ENCODE measurements at regions of chr1 and their contacts with region 1.

Region 1: GRCh38 chr1:168266644-168267186 is 14.0 kb upstream of the TBX19 start:
- DNase-seq: no peak
- H3K4me3 ChIP-seq: no peak overlapping the region
- H3K27ac ChIP-seq: no peak overlapping the region
- H3K4me1 ChIP-seq: peaks cover 5% of the 10 kb centered on the region
- H3K27me3 ChIP-seq: no peaks in the 10 kb centered on the region
- CTCF ChIP-seq: no peak
- EP300 ChIP-seq: no peak
- POLR2A ChIP-seq: no peak

Region 2: DNA sequence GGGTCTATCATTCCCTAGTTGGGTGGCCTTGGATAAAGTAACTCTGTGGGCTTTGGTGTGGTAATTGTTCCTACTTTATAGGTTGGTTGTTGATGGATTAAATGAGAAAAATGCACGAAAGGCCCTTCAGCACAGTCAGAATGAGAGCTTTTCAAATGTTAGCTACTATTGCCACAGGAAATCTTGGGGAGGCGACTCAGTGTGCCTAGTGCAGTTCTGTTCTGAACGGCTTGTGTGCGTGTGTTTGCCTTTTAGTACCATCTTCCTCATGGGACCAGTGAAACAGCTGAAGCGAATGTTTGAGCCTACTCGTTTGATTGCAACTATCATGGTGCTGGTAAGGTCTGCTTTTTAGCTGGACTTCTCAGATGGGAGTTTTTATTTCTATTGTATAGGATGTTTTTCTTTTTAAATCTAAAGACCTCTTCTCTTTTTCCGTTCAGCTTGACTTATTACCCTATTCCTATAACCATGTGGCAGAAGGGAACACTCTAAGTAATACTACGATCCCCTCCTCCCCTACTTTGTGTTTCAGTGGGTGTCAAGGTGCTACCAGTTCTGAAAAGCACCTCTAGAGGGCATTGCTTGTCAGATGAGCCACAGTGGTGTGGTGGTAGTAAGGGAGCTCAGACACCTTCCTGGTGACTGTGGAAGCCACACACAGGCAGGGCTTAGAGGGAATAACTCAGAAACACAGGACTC is 31.7 kb before region 1 on chr1:
- intact Hi-C with region 1: loop called in 1 of 4 experiments (anchors 1 kb)
- DNase-seq: no peak
- H3K4me3 ChIP-seq: no peak overlapping the region
- H3K27ac ChIP-seq: no peak overlapping the region
- H3K4me1 ChIP-seq: peaks cover 6% of the 10 kb centered on the region
- H3K27me3 ChIP-seq: no peaks in the 10 kb centered on the region
- CTCF ChIP-seq: peak in 2 of 3 donors; percentile 25 to 27
- EP300 ChIP-seq: no peak
- POLR2A ChIP-seq: no peak